Ascending aorta (tissue), 2 donors: ENCODE measurements at regions of chr19 and their contacts with region 1.

Region 1: DNA sequence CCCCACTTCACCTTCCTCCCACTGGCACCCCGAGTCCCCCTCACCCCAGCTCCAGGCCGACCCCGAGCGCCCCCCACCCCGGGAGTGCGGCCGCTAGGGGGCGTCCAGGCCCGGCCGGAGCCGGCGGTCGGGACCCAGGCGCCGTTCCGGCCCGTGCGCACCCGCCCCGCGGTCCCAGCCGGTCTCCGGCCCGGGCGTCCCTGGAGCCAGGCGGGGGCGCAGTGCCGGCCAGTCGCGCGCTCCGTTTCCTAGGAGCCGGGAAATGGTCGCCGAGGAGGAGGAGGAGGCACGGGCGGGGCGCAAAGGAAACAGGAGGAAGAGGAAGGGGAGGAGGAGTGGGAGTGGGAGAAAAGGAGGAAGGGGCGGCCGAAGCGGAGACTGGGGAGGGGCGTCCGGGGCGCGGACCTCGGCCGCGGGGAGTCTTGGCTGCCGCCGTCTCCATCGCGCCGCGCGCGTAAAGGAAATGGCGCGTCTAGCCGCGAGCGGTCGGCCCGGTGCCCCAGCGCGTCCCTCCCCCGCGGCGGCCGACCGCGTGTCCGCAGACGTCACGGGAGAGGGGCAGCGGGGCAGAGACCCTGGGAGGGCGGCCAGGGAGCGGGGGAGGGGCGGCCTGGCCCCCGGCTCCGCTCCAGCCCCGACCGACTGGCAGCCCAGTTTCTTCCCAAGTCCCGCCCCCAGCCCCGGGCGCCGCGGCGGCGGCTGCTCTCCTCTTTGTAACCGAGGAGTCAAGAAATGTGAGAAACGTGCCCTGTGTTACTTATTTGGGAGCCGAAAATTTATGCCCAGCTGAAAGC is 1.1 kb upstream of the KCTD15 start:
- DNase-seq: peak in 1 of 2 donors; percentile 88
- H3K4me3 ChIP-seq: peak overlapping the region; percentile 77 to 93
- H3K27ac ChIP-seq: peak overlapping the region; percentile 93 to 96
- H3K4me1 ChIP-seq: peaks cover 4 to 6% of the 10 kb centered on the region in 2 donors
- H3K27me3 ChIP-seq: no peaks in the 10 kb centered on the region
- CTCF ChIP-seq: peak; percentile 69 to 83 (median 77)

Region 2: DNA sequence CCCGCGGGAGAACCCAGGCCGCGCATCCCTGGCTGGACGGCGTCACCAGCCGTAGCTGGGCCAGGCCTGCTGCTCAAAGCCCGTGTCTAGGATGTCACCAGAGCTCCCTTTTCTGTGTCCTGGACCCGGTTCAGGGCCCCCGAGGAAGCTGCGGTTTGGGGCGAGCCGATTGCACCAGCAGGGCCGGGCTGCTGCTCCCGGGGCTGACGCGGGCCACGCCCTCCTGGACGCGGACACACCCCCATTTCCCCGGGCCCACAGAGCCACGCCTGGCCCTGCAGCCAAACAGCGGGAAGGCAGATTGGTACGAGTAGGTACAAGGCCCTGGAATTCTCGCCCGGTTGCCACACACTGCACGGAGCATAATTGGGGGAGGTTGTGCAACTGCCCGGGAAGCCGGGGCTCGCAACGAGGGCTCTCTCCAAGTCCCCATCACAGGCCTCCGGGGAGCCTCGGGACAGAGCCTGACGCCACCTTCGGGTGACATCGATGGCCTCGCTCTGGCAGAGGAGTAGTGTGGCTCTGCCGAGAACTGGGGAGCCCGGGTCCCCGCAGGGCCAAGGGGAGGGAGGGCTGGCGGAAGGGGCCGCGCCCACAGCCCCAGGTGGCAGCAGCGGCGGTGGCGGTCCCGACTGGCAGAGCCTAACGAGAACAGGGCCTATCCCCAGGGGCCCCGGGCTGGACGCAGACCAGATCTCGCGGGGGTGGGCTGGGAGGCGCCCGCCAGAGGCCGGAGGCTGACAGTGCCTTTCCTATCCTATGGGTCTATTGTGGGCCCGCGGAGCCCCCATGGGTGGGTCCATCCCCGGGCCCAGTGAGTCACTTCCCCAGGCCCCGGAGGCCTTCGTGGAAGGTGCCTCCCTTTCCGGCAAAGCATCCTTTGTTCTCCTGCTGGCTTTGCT is 24.6 kb after region 1 on chr19:
- intact Hi-C with region 1: loop called (anchors 1 kb)
- DNase-seq: peak; percentile 30 to 90
- H3K4me3 ChIP-seq: peak overlapping the region; percentile 56 to 64
- H3K27ac ChIP-seq: peak overlapping the region; percentile 67 to 84
- H3K4me1 ChIP-seq: peaks cover 0 to 13% of the 10 kb centered on the region in 2 donors
- H3K27me3 ChIP-seq: no peaks in the 10 kb centered on the region
- CTCF ChIP-seq: no peak

Region 3: GRCh38 chr19:33868788-33869412 is 73.3 kb after region 1 on chr19:
- intact Hi-C with region 1: loop called (anchors 5 kb)
- DNase-seq: peak in 1 of 2 donors; percentile 66
- H3K4me3 ChIP-seq: peak overlapping the region in 1 of 2 donors; percentile 58
- H3K27ac ChIP-seq: peak overlapping the region in 1 of 2 donors; percentile 44
- H3K4me1 ChIP-seq: peaks cover 0 to 7% of the 10 kb centered on the region in 2 donors
- H3K27me3 ChIP-seq: no peaks in the 10 kb centered on the region
- CTCF ChIP-seq: peak in 1 of 3 experiments; percentile 18

Region 4: GRCh38 chr19:33905937-33906576 is 110.5 kb after region 1 on chr19:
- intact Hi-C with region 1: loop called (anchors 5 kb)
- DNase-seq: peak in 1 of 2 donors; percentile 71
- H3K4me3 ChIP-seq: peak overlapping the region; percentile 59 to 60
- H3K27ac ChIP-seq: peak overlapping the region; percentile 29 to 57
- H3K4me1 ChIP-seq: peaks cover 4 to 6% of the 10 kb centered on the region in 2 donors
- H3K27me3 ChIP-seq: no peaks in the 10 kb centered on the region
- CTCF ChIP-seq: no peak